Activated CD4-positive, alpha-beta T cell treated with anti-CD3 and anti-CD28 coated beads, Interleukin-2, amount 10 ng/mL, durations not matched to agents 7 days and 5 days (primary cell): ENCODE measurements at regions of chr17 and their contacts with region 1.

Region 1: DNA sequence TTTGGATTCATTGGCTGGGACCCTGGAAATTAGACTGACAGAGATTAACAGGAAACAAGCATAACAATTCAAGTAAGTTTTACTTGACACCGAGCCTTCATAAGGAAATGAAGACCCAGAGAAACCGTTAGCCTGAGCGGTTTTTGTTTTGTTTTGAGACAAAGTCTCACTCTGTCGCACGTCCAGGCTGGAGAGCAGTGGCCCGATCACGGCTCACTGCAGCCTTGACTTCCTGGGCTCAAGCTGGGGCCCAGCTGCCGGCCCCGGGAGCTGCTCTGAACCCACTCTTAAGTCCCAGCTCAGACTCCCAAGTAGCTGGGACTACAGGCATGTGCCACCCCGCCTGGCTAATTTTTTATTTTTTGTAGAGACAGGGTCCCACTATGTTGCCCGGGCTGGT is 321.3 kb downstream of the SEC14L1 start:
- DNase-seq: peak; percentile 69
- H3K4me3 Mint-ChIP-seq: peak overlapping the region; percentile 95
- H3K27ac Mint-ChIP-seq: peak overlapping the region; percentile 98
- H3K4me1 Mint-ChIP-seq: peaks cover 89% of the 10 kb centered on the region
- H3K27me3 Mint-ChIP-seq: no peaks in the 10 kb centered on the region

Region 2: GRCh38 chr17:77444984-77445759 is 16.9 kb before region 1 on chr17:
- CTCF ChIA-PET with region 1: interaction called, 10 read pairs
- POLR2A ChIA-PET with region 1: interaction called, 4 read pairs
- DNase-seq: peak; percentile 92
- H3K4me3 Mint-ChIP-seq: peak overlapping the region; percentile 83
- H3K27ac Mint-ChIP-seq: peak overlapping the region; percentile 97
- H3K4me1 Mint-ChIP-seq: peaks cover 97% of the 10 kb centered on the region
- H3K27me3 Mint-ChIP-seq: no peaks in the 10 kb centered on the region

Region 3: DNA sequence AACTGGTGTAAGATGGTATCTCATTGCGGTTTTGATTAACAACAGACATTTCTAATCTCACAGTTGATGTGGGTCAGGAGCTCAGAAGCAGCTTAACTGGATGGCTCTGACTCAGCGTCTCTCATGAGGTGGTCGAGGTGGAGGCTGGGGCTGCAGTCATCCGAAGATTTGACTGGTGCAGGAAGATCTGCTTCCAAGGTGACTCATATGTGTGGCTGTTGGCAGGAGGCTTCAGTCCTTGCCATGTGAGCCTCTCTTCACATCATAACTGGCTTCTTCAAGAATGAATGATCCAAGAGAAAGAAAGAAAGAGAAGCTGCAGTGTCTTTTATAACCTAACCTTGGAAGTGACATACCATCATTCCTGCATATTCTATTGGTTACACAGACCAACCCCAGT is 54.8 kb after region 1 on chr17:
- CTCF ChIA-PET with region 1: no interaction called
- POLR2A ChIA-PET with region 1: no interaction called
- DNase-seq: no peak
- H3K4me3 Mint-ChIP-seq: no peak overlapping the region
- H3K27ac Mint-ChIP-seq: no peak overlapping the region
- H3K4me1 Mint-ChIP-seq: peaks cover under 1% of the 10 kb centered on the region
- H3K27me3 Mint-ChIP-seq: no peaks in the 10 kb centered on the region